ENCODE measurements at regions of chr16 and their contacts with region 1.

Region 1: DNA sequence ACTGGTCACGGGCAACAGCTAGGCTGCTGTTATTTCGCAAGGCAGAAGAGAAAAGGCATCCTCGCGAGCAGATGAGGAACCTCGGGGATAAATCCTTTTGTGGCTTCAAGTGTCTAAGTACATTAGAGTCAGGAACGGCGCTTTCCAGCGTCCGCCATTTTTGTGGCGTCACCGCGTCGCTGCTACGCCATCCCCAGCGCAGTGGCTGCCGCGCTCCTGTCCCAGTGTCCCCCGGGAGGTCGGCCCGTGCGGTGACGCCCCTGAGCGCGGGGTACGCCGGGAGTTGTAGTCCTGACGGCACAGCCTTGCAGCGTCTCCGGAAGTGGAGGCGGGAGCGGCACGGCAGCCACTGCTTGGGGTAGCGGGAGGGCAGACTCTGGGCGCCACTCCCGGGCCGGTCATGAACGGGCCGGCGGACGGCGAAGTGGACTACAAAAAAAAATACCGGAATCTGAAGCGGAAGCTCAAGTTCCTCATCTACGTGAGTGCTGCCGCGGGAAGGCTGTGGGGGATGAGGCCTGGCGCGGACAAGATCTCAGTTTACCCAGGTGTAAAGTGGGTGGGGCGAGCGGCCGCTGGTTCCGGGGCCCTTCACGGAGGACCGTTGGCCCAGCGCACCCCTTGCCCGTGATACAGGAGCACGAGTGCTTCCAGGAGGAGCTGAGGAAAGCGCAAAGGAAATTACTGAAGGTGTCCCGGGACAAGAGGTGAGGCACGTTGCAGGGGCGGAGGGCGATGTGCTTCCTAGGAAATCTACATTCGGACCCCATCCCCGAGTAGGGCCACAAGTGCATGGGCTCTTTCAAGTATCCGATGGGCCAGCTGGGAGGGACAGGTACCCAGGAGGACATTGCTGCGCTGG is at the start of gene INO80E:
- DNase-seq: peak; percentile 90
- ATAC-seq: peak; percentile 94
- H3K4me3 ChIP-seq: peak within 1 kb of the TSS; percentile 83 to 95
- H3K27ac ChIP-seq: peak within 1 kb of the TSS; percentile 88
- H3K4me1 ChIP-seq: peaks cover 9 to 27% of the 10 kb centered on the region in 2 experiments
- H3K27me3 ChIP-seq: no peaks in the 10 kb centered on the region
- CTCF ChIP-seq: no peak
- POLR2A ChIP-seq: peak; percentile 50
- RAD21 ChIP-seq: no peak
- total RNA-seq, gene INO80E: 89.8 TPM

Region 2: GRCh38 chr16:29900102-29900887 is 95.8 kb before region 1 on chr16 and contains the start of gene ASPHD1:
- CTCF ChIA-PET with region 1: no interaction called
- POLR2A ChIA-PET with region 1: interaction called, 3 read pairs
- RAD21 ChIA-PET with region 1: no interaction called
- intact Hi-C with region 1: loop called (anchors 1 kb)
- DNase-seq: peak; percentile 29
- ATAC-seq: peak; percentile 66
- H3K4me3 ChIP-seq: peak within 1 kb of the TSS; percentile 71 to 75
- H3K27ac ChIP-seq: peak within 1 kb of the TSS; percentile 78
- H3K4me1 ChIP-seq: peaks cover 9 to 31% of the 10 kb centered on the region in 2 experiments
- H3K27me3 ChIP-seq: no peaks in the 10 kb centered on the region
- CTCF ChIP-seq: no peak
- POLR2A ChIP-seq: no peak
- RAD21 ChIP-seq: no peak
- total RNA-seq, gene ASPHD1: 18.4 TPM

Measured in HCT116 (cell line).